Heart right ventricle (tissue), 16 donors: ENCODE measurements at regions of chr12 and their contacts with region 1.

Region 1: DNA sequence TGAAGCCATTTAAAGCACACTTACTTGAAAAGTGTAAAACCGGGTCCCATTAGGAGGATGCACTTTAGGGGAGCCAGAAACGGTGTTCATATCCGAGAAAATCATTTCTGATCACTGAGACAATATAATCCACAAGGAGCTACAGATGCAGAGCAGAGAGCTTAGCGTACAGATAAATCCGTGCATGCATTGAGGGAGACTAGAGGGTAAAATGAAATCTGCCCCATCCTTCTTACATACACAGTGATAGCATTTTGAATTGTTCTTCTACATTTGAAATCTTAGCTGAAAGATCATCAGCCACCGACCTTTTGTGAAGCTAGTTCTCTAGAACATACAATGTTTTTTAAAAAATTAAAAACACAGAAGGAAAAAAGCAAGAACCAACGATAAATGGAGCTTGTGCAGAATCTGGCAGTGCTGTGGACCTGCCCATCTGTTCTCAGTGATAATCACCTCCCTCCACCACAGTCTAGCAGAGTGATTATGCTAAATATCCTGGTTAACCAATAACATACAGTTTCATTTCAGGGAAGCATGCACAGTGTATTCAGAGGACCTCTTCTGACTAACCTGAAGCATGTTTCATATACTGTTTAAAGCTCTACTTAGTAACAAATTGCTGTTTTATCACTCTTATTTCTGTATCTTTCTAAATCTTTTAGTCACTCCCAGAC is 161.1 kb downstream of the PPFIA2 start:
- DNase-seq: no peak
- ATAC-seq: no peak
- H3K4me3 ChIP-seq: no peak overlapping the region
- H3K27ac ChIP-seq: no peak overlapping the region
- H3K4me1 ChIP-seq: no peaks in the 10 kb centered on the region
- H3K27me3 ChIP-seq: no peaks in the 10 kb centered on the region
- CTCF ChIP-seq: no peak

Region 2: DNA sequence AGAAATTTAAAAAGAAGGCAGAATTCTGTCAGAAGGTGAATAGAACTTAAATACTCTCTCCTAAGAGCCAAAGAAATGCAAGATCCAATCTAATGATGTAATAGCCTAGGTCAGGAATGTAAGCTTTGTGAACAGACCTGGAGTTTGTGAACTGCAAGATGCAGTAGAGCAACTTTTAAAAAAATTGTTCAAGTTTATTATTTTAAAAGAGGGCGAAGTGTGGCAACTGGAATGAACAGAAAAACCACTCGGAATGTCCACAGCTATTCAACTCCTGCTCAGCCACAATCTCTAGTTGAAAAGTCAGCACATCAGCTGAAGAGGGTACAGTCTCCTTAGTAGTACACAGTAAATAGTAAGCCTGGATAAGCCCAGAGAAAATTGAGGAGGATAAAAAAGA is 67.7 kb before region 1 on chr12:
- intact Hi-C with region 1: loop called in 1 of 10 experiments (anchors 10 kb)
- DNase-seq: no peak
- ATAC-seq: no peak
- H3K4me3 ChIP-seq: no peak overlapping the region
- H3K27ac ChIP-seq: no peak overlapping the region
- H3K4me1 ChIP-seq: no peaks in the 10 kb centered on the region
- H3K27me3 ChIP-seq: no peaks in the 10 kb centered on the region
- CTCF ChIP-seq: no peak

Region 3: GRCh38 chr12:81712536-81712935 is 114.5 kb after region 1 on chr12:
- intact Hi-C with region 1: no loop called
- DNase-seq: no peak
- ATAC-seq: no peak
- H3K4me3 ChIP-seq: no peak overlapping the region
- H3K27ac ChIP-seq: no peak overlapping the region
- H3K4me1 ChIP-seq: no peaks in the 10 kb centered on the region
- H3K27me3 ChIP-seq: no peaks in the 10 kb centered on the region
- CTCF ChIP-seq: no peak